Ascending aorta (tissue), 2 donors: ENCODE measurements at regions of chr5 and their contacts with region 1.

Region 1: GRCh38 chr5:81751009-81751835 is at the start of gene SSBP2:
- DNase-seq: peak; percentile 97 to 100
- H3K4me3 ChIP-seq: peak within 1 kb of the TSS; percentile 86 to 94
- H3K27ac ChIP-seq: peak within 1 kb of the TSS; percentile 98 to 100
- H3K4me1 ChIP-seq: peaks cover 8 to 38% of the 10 kb centered on the region in 2 donors
- H3K27me3 ChIP-seq: no peaks in the 10 kb centered on the region
- CTCF ChIP-seq: no peak
- total RNA-seq, gene SSBP2: 22.4 TPM

Region 2: DNA sequence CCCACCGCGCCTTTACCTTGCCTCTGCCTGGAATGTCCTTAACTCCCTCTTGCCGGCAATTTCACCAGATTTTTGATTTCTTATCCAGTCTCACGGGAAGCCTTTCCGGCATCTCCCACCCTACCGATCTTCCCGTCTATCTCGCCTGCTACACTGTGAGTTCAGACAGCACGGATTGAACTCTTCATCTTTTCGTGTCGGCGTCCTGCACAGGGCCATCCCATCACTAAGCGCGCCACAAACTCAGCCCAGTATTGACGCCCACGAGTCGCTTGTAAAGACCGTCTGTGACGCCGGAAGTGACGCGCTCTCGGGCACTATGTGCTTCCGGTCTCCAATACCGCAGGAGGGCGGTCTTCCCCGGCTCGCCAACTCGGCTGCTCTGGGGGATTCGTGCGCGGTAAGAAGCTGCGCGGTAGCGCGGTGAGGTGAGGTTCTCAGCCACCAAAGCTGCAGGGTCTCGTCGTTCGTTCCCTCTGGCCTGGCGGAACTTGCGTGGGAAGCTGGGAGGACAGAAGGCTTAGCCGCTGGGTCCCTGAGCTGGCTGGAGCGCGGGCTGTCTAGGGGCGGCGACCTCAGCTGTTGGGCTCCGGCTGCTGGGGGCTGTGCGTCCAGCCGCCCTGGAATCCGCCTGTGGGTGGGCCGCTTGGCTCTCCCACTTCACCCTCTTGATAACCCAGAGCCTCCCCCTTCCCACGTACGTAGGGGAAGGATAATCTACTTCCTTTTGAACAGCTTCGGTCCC is 449.8 kb before region 1 on chr5 and contains the start of gene ZCCHC9:
- intact Hi-C with region 1: loop called (anchors 2 kb)
- DNase-seq: peak; percentile 74 to 96
- H3K4me3 ChIP-seq: peak within 1 kb of the TSS; percentile 77 to 96
- H3K27ac ChIP-seq: peak within 1 kb of the TSS; percentile 88 to 93
- H3K4me1 ChIP-seq: peaks cover 5 to 16% of the 10 kb centered on the region in 2 donors
- H3K27me3 ChIP-seq: no peaks in the 10 kb centered on the region
- CTCF ChIP-seq: peak in 2 of 3 experiments; percentile 17 to 19
- total RNA-seq, gene ZCCHC9: 10.5 TPM

Region 3: DNA sequence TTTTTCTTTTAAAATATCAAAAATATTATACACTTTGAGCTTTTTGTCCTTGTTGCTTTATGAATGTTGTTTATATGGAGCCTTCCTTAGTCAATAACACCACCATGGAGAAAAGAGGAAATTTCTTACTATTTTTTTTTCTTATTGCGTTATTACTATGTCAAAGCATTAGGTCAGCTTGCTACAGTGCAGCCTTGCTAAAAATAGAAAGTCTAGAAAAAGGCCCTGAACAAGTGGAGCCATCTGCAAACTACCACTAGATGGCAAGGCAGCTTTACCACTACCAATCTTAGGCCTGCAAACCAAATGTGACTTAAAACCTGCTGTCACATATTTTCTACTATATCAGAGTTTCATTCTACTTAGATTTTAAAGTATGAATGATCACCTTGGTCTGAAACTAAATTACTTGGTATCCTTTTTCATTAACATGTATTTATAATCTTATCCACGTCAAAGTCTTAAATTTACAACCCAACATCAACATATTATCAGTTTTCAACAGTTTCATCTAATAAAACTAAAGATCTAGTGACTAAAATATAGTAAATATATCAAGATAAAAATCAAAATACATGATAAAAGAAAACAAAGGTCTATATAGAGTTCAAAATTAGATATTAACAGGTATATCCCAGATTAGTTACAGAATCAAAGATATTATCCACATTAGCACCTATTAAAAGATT is 244.2 kb before region 1 on chr5:
- intact Hi-C with region 1: loop called (anchors 2 kb)
- DNase-seq: peak; percentile 12 to 83
- H3K4me3 ChIP-seq: no peak overlapping the region
- H3K27ac ChIP-seq: peak overlapping the region; percentile 45 to 67
- H3K4me1 ChIP-seq: peaks cover 0 to 11% of the 10 kb centered on the region in 2 donors
- H3K27me3 ChIP-seq: no peaks in the 10 kb centered on the region
- CTCF ChIP-seq: peak; percentile 78 to 85 (median 82)

Region 4: DNA sequence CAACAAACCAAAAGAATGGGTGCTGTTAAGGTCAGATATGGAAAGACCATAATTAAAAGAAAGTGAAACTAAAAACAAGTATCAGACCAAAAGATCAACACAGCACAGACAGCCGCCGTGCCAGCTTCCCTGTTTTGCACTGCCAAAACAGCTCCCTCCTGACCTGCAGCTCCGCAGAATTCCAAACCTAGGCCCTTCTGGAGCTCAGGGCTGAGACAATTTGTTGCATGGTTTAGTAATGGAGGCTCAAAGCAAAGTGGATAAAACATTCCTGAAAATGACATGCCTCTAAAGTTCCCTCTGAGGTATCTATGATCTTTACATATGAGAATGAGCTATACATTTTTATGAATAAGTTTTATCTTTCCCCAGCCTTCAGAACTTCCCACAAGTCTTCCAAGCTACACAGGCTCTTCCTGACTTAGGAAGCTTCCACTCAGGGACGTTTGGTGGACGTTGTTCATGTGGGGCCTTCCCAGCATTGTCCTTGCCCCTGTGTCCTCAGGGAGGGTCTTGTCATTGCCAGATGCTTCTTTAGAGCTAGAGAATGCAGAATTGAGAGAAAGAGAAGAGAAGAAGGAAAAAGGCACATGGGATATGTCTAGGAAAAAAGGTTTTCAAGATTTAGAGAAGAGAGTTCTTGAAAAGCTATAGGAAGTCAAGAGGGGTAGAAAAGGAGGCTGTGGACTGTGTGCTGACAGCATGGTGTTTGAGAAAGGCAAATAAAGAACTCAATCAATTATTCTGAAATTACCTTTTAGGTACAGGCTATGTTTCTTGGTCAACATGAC is 28.1 kb after region 1 on chr5:
- intact Hi-C with region 1: loop called (anchors 1 kb)
- DNase-seq: peak; percentile 28 to 81
- H3K4me3 ChIP-seq: peak overlapping the region; percentile 2 to 28
- H3K27ac ChIP-seq: peak overlapping the region; percentile 86 to 88
- H3K4me1 ChIP-seq: peaks cover 0 to 31% of the 10 kb centered on the region in 2 donors
- H3K27me3 ChIP-seq: no peaks in the 10 kb centered on the region
- CTCF ChIP-seq: no peak

Region 5: DNA sequence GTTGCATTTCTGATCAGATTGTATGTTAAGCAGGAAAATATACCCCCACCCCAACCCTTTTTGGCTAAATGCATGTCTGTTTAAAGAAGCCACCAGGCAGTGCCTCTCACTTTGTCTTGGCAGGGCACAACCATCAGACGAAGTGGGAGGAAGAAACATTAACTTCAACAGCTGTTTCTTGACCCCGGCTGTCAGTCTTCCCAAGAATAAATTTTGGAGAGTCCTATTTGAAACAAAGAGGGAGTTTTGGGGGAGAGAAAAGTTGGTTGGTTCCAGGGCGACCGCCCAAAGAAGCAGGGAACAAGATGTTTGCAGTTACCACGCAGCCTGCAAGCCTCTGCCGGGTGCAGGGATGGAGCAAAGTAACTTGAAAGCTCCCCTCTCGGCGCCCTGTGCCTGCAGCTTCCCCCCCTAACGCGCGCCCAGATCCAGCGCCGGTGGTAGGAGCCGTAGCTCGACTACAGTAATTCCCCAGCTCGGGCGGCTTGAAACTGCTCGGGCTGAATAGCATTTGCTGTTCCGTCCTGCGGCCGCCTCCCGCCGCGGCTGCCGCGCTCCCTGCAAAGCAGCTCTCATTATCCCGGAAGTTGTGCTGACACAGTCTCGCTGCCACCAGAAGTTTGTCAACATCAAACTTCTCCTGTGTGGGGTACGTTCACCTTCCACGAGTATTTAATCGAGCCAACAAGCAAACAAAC is 100.4 kb after region 1 on chr5:
- intact Hi-C with region 1: loop called (anchors 1 kb)
- DNase-seq: peak; percentile 85 to 97
- H3K4me3 ChIP-seq: peak overlapping the region; percentile 59 to 73
- H3K27ac ChIP-seq: peak overlapping the region; percentile 88 to 90
- H3K4me1 ChIP-seq: peaks cover 0 to 38% of the 10 kb centered on the region in 2 donors
- H3K27me3 ChIP-seq: no peaks in the 10 kb centered on the region
- CTCF ChIP-seq: no peak

Region 6: GRCh38 chr5:82165740-82166530 is 414.7 kb after region 1 on chr5:
- intact Hi-C with region 1: loop called (anchors 1 kb)
- DNase-seq: peak in 1 of 2 donors; percentile 83
- H3K4me3 ChIP-seq: no peak overlapping the region
- H3K27ac ChIP-seq: peak overlapping the region; percentile 0 to 36
- H3K4me1 ChIP-seq: peaks cover 2 to 9% of the 10 kb centered on the region in 2 donors
- H3K27me3 ChIP-seq: no peaks in the 10 kb centered on the region
- CTCF ChIP-seq: peak; percentile 65 to 75 (median 73)